RWPE1 (cell line): ENCODE measurements at regions of chr7 and their contacts with region 1.

Region 1: GRCh38 chr7:131480384-131481315 is 75.8 kb downstream of the PODXL start:
- DNase-seq: no peak
- H3K27ac ChIP-seq: no peak overlapping the region
- CTCF ChIP-seq: no peak

Region 2: DNA sequence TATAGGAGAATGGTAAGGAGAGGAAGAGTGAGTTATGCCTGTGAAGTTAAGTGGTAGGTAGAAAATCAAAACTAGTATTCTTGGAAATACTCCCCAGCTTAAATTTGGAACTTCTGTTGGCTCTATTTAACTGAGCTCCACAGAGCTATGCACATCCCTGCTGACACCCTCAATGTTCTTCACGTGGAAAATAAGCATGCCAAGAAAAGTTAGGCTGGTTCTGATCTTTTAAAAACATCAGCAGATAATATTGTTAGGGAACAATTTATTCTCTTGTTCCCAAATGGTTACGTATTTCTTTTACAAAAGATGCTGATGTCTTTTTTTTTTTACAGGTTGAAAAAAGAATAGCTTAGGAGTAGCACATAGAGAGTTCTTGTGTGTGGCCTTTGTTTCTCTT is 41.7 kb before region 1 on chr7:
- CTCF ChIA-PET with region 1: interaction called, 10 read pairs
- POLR2A ChIA-PET with region 1: no interaction called
- DNase-seq: no peak
- H3K27ac ChIP-seq: no peak overlapping the region
- CTCF ChIP-seq: no peak